K562 (cell line): ENCODE measurements at regions of chr6 and their contacts with region 1.

Region 1: GRCh38 chr6:33172688-33173534 is 19.4 kb downstream of the COL11A2 start:
- DNase-seq: peak; percentile 53 to 78 (median 72)
- ATAC-seq: peak; percentile 48
- H3K4me3 ChIP-seq: no peak overlapping the region
- H3K27ac ChIP-seq: no peak overlapping the region
- H3K4me1 ChIP-seq: no peaks in the 10 kb centered on the region
- H3K27me3 ChIP-seq: peaks cover 3 to 18% of the 10 kb centered on the region in 2 experiments; a peak in 4 of 5 replicates
- CTCF ChIP-seq: peak; percentile 86 to 89 (median 86)
- EP300 ChIP-seq: no peak
- POLR2A ChIP-seq: no peak
- RAD21 ChIP-seq: peak; percentile 78 to 85

Region 2: GRCh38 chr6:33118525-33119123 is 54.3 kb before region 1 on chr6:
- CTCF ChIA-PET with region 1: interaction called, 20 read pairs
- POLR2A ChIA-PET with region 1: no interaction called
- in situ Hi-C with region 1: no loop called
- intact Hi-C with region 1: loop called (anchors 2 kb)
- DNase-seq: peak; percentile 56 to 72 (median 60)
- ATAC-seq: peak; percentile 63; the same call in 2 of the 3 replicates
- H3K4me3 ChIP-seq: no peak overlapping the region
- H3K27ac ChIP-seq: no peak overlapping the region
- H3K4me1 ChIP-seq: peaks cover 0 to 6% of the 10 kb centered on the region in 2 experiments; a peak in 1 of 5 replicates
- H3K27me3 ChIP-seq: peaks cover 16 to 28% of the 10 kb centered on the region in 2 experiments
- CTCF ChIP-seq: peak; percentile 59 to 86 (median 63); a peak in 5 of 6 replicates
- EP300 ChIP-seq: no peak
- POLR2A ChIP-seq: no peak
- RAD21 ChIP-seq: peak; percentile 68 to 79

Region 3: DNA sequence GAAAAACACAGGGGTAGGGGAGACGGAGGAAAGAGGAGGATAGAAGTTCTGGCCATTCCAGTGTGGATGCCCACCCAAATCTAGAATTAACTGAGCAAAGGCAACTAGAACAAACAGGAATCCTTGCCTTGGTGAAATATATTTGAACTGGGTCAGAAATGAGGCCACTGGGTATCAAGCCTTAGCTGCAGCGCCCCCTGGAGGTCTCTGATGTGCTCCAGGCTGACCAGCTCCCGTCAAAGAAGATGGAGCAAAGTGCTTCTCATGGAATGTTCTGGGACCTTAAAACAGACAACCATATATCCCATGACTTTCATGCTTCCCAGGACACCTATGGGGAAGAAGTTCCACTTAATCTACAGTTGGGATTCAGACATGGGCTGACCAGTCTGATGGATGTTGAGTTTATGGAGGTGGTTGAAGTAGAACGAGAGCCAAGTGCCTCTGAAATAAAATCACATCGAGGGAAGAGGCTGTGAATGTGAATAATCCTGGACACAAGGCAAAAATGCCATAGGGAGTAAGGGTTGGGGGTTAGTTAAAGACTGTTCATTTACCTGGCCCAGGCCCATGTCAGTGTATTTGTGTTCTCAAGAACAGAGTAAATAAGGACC is 46.7 kb before region 1 on chr6:
- CTCF ChIA-PET with region 1: interaction called, 20 read pairs
- POLR2A ChIA-PET with region 1: no interaction called
- in situ Hi-C with region 1: no loop called
- intact Hi-C with region 1: loop called (anchors 2 kb)
- DNase-seq: peak; percentile 75 to 79 (median 77)
- ATAC-seq: peak; percentile 91
- H3K4me3 ChIP-seq: no peak overlapping the region
- H3K27ac ChIP-seq: no peak overlapping the region
- H3K4me1 ChIP-seq: no peaks in the 10 kb centered on the region
- H3K27me3 ChIP-seq: peaks cover 5 to 26% of the 10 kb centered on the region in 2 experiments; a peak in 3 of 5 replicates
- CTCF ChIP-seq: peak; percentile 74 to 90 (median 79)
- EP300 ChIP-seq: no peak
- POLR2A ChIP-seq: no peak
- RAD21 ChIP-seq: peak in 1 of 2 experiments; percentile 41; a peak in 2 of 4 replicates

Region 4: GRCh38 chr6:33161354-33162331 is 11.3 kb before region 1 on chr6:
- CTCF ChIA-PET with region 1: interaction called, 5 read pairs
- POLR2A ChIA-PET with region 1: interaction called, 11 read pairs
- in situ Hi-C with region 1: no loop called
- intact Hi-C with region 1: no loop called
- DNase-seq: peak; percentile 83 to 95 (median 93)
- ATAC-seq: peak; percentile 97
- H3K4me3 ChIP-seq: peak overlapping the region; percentile 30
- H3K27ac ChIP-seq: no peak overlapping the region
- H3K4me1 ChIP-seq: peaks cover 7 to 26% of the 10 kb centered on the region in 2 experiments; a peak in 3 of 5 replicates
- H3K27me3 ChIP-seq: peaks cover 5 to 39% of the 10 kb centered on the region in 2 experiments; a peak in 3 of 5 replicates
- CTCF ChIP-seq: peak; percentile 93 to 96 (median 94)
- EP300 ChIP-seq: no peak
- POLR2A ChIP-seq: 0 out of 2 replicates have a peak, but pooled peaks have one; percentile 32
- RAD21 ChIP-seq: peak; percentile 66 to 83